IMR-90 (cell line): ENCODE measurements at regions of chr21 and their contacts with region 1.

Region 1: DNA sequence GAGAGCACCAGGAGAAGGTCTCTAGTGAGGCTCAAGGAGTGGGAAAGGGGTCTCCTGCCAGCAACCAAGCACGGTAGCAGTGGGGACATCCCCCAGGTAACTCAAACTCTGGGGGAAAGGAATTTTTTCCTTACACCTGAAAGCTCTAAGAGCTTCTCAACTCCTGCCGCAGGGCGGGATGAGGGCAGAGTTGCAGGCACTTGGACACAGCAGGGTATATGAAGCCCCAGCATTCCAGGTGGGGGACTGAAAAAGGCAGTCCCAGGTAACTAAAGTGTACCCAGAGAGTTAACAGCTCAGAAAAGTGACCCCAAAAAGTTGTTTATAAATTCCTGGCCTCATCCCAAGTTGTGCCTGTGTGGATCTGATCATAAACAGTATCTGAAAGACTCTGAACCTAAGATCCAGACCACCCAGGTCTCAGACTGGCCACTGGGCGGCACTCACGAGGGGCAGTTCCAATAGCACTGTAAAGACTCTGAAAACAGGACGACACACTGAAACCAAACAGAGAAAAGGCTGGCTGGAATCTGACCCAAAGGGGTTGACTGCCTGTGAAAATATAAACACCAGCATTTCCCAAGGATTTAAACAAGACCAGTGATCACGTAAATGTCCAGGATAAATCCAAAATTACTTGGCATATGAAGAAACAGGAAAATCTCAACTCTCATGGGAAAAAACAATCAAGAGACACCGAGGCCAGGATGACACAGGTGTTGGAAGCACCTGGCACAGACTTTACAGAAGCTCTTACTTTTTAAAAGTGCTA is 47.5 kb downstream of the HSF2BP start:
- DNase-seq: peak; percentile 95
- ATAC-seq: peak; percentile 90
- H3K4me3 ChIP-seq: no peak overlapping the region
- H3K27ac ChIP-seq: peak overlapping the region; percentile 26; the same call in 1 of the 2 replicates
- H3K4me1 ChIP-seq: peaks cover 19% of the 10 kb centered on the region
- H3K27me3 ChIP-seq: no peaks in the 10 kb centered on the region
- CTCF ChIP-seq: peak; percentile 82
- POLR2A ChIP-seq: no peak
- RAD21 ChIP-seq: peak; percentile 73

Region 2: DNA sequence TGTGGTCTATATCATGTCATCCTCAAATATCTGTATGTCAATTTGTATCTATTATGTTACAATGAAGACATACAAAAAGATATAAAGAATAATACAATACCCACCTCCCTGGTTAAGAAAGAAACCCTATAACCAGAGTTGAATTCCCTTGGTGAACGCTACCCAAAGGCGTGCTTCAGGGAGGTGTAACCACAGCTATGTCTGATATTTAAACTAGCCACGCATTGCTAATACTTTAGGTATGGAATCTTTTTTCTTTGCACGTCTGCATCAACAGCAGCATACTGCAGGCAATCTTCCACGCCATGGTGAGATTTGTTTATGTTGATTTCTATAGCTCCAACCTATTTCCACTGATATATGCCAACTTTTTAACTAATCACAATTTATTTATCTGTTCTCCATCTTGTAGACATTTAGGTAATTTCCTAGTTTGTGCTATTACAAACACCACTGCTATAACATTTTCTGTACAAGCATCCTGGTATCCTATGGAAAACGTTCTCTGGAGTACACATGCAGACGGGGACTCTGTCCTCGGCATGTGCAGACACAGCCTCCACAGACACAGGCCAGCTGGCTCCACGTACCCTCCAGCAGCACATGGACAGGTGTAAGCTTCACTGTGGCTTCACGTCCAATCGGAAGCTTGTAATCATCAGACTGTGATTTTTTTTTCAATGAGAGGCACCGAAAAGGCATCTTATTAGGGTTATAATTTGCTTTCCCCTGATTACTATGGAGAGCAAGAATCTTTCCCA is 11.0 kb before region 1 on chr21:
- CTCF ChIA-PET with region 1: interaction called, 6 read pairs
- POLR2A ChIA-PET with region 1: no interaction called
- dilution Hi-C with region 1: no loop called
- in situ Hi-C with region 1: no loop called
- intact Hi-C with region 1: loop called (anchors 1 kb)
- DNase-seq: peak; percentile 95
- ATAC-seq: peak; percentile 79
- H3K4me3 ChIP-seq: no peak overlapping the region
- H3K27ac ChIP-seq: peak overlapping the region; percentile 96
- H3K4me1 ChIP-seq: peaks cover 36% of the 10 kb centered on the region
- H3K27me3 ChIP-seq: no peaks in the 10 kb centered on the region
- CTCF ChIP-seq: no peak
- POLR2A ChIP-seq: no peak
- RAD21 ChIP-seq: peak; percentile 15; the same call in 1 of the 2 replicates

Region 3: DNA sequence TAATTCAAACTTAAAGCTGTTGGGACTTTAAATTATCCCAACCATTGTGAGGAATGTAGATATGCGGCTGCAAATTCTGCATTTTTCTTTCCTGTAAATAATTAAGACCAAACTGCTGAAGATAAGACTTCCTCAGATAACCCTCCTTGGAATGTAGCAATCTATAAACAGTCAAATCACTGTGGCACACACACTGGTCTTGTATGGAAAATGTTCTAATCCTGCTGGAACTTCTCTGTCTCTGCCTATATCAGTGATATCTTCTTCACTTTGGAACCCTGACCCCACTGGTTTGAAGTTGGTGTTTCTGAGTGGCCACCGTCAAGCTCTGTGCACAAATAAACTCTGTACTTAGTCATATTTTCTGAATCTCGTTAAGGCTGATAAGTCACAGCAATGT is 14.6 kb after region 1 on chr21:
- CTCF ChIA-PET with region 1: no interaction called
- POLR2A ChIA-PET with region 1: no interaction called
- dilution Hi-C with region 1: no loop called
- in situ Hi-C with region 1: no loop called
- intact Hi-C with region 1: loop called (anchors 1 kb)
- DNase-seq: peak; percentile 64
- ATAC-seq: peak; percentile 96
- H3K4me3 ChIP-seq: no peak overlapping the region
- H3K27ac ChIP-seq: peak overlapping the region; percentile 79; the same call in 1 of the 2 replicates
- H3K4me1 ChIP-seq: peaks cover 4% of the 10 kb centered on the region
- H3K27me3 ChIP-seq: no peaks in the 10 kb centered on the region; the same call in 1 of the 2 replicates
- CTCF ChIP-seq: no peak
- POLR2A ChIP-seq: no peak
- RAD21 ChIP-seq: no peak

Region 4: DNA sequence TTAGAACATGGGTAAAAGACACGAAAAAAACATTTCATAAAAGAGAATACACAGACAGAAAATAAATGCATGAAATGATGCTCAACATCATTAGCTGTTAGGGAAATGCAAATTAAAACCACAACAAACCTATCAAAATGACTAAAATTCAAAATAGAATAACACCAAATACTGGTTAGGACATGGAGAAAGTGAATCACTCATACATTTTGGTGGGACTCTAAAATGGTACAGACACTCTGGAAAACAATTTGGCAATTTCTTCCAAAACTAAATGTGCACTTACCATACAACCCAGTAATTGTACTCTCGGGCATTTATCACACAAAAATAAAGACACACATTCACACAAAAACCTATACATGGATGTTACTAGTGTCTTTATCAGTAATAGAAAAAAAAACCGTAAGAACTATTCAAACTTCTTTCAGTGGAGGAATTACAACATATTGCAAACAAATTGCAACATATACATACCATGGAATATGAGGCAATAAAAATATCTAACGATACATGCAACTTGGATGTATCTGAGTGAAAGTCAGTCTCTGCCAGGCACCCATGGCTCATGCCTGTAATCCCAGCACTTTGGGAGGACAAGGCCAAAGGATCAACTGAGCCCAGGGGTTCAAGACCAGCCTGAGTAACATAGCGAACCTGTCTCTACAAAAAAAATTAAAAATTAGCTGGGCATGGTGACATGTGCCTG is 27.8 kb after region 1 on chr21:
- CTCF ChIA-PET with region 1: interaction called, 12 read pairs
- POLR2A ChIA-PET with region 1: no interaction called
- dilution Hi-C with region 1: no loop called
- in situ Hi-C with region 1: loop called (anchors 5 kb)
- intact Hi-C with region 1: no loop called
- DNase-seq: peak; percentile 88
- ATAC-seq: peak; percentile 78
- H3K4me3 ChIP-seq: no peak overlapping the region
- H3K27ac ChIP-seq: peak overlapping the region; percentile 92
- H3K4me1 ChIP-seq: peaks cover 10% of the 10 kb centered on the region
- H3K27me3 ChIP-seq: no peaks in the 10 kb centered on the region
- CTCF ChIP-seq: no peak
- POLR2A ChIP-seq: no peak
- RAD21 ChIP-seq: no peak

Region 5: GRCh38 chr21:44065428-44065827 is 453.6 kb after region 1 on chr21:
- CTCF ChIA-PET with region 1: no interaction called
- POLR2A ChIA-PET with region 1: no interaction called
- dilution Hi-C with region 1: no loop called
- in situ Hi-C with region 1: no loop called
- intact Hi-C with region 1: no loop called
- DNase-seq: peak; percentile 57
- ATAC-seq: no peak
- H3K4me3 ChIP-seq: no peak overlapping the region
- H3K27ac ChIP-seq: no peak overlapping the region
- H3K4me1 ChIP-seq: no peaks in the 10 kb centered on the region
- H3K27me3 ChIP-seq: no peaks in the 10 kb centered on the region
- CTCF ChIP-seq: no peak
- POLR2A ChIP-seq: no peak
- RAD21 ChIP-seq: no peak